ENCODE measurements at regions of chr6 and their contacts with region 1.

Region 1: DNA sequence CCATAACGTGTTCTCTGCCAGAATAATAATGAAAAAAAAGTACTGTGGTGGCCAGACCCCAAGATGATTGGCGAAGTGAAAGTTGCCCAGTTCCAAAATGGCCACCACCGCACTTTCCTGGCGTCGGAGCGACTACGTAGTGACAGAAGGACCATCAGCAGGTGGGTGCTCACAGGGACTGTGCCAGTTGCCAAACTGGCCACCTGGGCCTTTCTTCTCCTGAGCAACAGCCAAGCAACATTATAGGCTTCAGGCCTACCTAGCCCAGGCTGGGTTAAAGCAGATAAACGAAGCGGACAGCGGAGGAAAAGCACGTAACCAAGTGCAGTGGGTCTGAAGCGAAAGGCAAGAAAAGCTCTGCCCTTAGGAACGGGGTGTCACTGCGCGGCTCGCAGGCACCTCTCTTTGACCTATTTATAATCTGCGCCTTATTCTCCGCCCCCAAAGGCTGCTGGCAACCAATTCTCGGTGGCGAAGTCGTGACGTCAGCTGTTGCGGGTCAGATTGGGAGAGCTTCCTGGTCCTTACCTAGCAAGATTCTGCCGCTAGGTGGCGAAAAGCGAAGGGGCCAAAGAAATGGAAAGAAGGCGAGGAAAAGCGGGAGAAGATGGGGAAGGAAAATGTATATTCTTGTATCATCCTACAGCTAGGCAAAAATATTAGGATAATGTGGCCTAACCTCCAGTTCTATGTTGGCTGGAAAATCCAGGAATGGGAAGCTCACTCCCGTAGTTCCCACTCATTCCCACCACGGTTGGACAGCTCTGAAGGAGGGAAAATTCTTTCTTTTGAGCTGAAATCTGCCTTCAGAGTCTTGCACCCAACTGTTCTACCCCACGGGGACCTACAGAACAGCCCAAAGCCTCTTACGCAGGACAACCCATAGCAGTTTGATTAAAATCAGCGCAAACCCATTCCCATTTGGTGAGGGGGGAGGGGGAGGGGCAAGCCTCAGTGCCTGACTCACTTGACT is 6.9 kb upstream of the MOG start:
- DNase-seq: peak; percentile 63
- H3K4me3 ChIP-seq: peak overlapping the region; percentile 35
- H3K27me3 ChIP-seq: peaks cover 3% of the 10 kb centered on the region; the same call in 1 of the 2 replicates
- CTCF ChIP-seq: peak; percentile 94

Region 2: DNA sequence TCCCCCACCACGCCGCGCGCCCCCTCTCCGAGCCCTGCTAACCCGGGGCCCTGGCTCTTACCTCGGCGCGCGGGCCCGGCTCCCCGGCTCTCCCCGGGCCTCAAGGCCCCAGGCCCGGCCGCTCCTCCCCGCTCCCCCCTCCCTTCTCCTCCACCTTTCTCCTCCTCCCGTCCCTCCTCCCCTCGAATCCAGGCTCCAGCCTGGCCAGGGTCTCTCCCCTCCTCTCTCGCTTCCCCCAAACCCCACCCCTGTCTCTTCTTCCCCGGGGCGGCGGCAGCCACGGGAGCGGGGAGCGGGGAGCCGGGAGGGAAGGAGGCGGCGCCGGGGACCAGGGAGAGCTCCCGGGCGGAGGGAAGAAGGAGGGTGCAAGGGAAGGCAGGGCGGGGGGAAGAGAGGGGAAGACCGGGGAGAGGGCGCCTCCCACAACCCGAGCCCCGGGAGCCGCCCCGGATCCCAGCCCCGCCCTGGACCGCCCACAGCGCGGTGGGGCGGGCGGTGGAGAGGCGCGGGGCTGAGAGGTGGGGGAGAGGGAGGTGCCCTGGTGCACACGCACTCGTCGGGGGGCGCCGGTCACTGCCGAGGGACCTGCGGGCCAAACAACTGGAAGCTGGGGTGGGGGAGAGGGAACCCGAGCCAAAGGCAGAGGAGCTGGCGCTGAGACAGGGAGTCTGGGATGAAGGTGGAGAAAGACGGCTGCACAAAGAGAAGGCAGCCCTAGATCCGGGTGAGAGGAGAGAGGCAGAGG is 17.0 kb before region 1 on chr6 and contains the start of gene GABBR1:
- CTCF ChIA-PET with region 1: interaction called, 81 read pairs
- POLR2A ChIA-PET with region 1: interaction called, 6 read pairs
- DNase-seq: peak; percentile 53
- H3K4me3 ChIP-seq: peak within 1 kb of the TSS; percentile 80
- H3K27me3 ChIP-seq: no peaks in the 10 kb centered on the region; the same call in 1 of the 2 replicates
- CTCF ChIP-seq: no peak
- polyA plus RNA-seq, gene GABBR1: 14.5 and 16.3 TPM in 2 replicates

Region 3: DNA sequence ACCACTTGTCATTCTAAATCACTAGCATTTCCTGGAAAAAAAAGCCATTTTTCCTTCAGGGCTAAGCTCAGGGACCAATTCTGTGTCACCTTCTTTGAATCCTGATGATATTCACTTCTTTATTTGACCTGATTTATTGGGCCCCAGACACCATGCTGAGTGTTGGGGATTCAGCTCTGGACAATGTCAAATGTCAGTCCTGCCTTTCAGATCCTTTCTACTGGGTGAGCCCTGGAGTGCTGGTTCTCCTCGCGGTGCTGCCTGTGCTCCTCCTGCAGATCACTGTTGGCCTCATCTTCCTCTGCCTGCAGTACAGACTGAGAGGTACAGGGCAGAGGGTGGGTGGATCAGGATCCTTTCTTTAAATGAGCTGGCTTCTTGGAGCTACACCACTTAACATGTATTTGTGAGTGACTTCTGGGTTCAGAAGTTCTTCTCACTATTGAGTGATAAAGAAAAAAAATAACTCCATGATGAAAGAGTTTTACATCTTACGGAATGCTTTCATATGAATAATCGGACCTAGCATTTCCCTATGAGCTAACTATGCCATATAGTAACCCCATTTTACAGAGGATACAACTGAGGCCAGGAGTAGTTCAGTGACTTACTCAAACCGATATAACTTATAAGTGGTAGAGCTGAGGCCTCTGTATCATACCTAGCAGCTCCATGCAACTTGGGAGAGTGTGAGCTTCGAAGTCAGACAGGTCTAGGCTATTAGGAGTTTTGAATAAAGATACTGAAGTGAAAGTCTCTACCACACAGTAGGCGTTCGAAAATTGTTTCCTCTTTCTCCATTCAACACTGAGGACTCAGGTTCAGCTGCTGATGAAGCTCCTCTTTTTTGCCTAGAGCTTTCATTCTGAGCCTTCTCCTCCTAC is 16.2 kb after region 1 on chr6:
- CTCF ChIA-PET with region 1: interaction called, 147 read pairs
- POLR2A ChIA-PET with region 1: no interaction called
- DNase-seq: no peak
- H3K4me3 ChIP-seq: no peak overlapping the region
- H3K27me3 ChIP-seq: peaks cover 5% of the 10 kb centered on the region
- CTCF ChIP-seq: no peak

Region 4: DNA sequence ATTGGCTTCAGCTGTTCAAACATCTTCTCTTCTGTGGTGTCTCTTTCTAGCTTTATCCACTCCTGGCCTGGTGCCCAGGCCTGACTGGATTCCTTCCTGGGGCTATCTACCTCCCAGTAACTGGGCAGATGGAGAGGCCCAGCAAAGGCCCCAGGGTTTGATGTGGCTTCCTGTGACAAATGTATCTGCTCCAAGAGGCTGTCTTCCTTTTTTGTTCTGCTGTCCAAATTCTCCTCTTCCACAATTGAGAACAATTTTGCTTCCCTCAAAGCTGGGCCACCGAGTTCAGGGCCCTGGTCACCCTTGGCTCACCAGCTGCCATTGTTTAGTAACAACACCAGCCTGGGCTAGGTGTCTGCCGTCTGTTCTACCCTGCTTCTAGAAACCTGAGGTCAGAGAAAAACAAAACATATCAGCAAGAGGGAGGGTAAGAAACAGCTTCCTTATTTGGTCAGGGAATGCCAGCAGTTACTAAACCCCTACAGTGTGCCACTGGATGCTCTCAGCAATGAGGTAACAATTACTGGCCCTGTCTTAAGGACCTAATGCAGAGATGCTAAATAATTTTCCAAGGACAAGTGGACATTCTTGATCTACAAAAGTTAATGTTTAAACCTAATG is 27.1 kb after region 1 on chr6:
- CTCF ChIA-PET with region 1: interaction called, 26 read pairs
- POLR2A ChIA-PET with region 1: no interaction called
- DNase-seq: no peak
- H3K4me3 ChIP-seq: no peak overlapping the region
- H3K27me3 ChIP-seq: no peaks in the 10 kb centered on the region
- CTCF ChIP-seq: no peak

Region 5: DNA sequence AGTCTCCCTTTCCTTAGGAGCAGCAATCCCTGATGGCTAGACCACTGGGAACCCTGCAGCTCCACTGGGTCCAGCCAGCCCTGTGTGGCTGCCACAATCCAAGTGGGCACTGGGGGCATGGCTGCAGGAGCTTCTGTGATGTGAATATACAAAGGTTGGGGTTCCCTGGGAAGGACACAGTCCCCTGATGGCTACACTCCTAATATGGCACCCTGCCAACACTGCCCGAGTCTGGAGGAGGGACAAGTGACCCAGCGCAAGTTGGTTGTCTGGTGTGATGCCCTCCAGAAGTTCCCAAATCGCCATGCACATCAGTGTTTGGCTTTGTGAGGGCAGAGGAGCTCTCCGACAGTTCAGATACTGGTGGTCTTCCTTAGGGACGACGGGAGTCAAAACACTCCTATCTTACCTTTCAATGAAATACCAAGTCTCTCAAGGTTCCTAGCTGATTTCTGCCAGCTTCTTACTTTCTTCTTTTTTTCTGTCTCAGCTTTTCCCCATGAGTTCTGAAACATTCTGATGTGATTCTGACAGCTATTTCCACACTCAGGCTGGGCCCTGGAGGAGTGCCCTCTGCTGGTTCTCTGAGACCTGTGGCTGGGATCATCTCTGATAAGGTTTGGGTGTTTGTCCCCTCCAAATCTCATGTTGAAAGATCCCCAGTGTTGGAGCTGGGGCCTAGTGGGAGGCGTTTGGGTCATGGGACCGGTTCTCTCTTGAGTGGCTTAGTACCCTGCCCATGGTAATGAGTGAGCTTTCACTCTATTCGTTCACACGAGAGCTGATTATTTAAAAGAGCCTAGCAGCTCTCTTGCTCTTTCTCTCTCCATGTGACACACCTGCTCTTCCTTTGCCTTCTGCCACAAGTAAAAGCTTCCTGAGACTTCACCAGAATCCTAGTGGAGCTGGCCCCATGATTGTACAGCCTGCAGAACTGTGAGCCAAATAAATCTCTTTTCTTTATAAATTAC is 46.5 kb after region 1 on chr6:
- CTCF ChIA-PET with region 1: interaction called, 34 read pairs
- POLR2A ChIA-PET with region 1: no interaction called
- DNase-seq: no peak
- H3K4me3 ChIP-seq: no peak overlapping the region
- H3K27me3 ChIP-seq: no peaks in the 10 kb centered on the region
- CTCF ChIP-seq: peak; percentile 59

Region 6: GRCh38 chr6:29752451-29753308 is 102.7 kb after region 1 on chr6:
- CTCF ChIA-PET with region 1: interaction called, 10 read pairs
- POLR2A ChIA-PET with region 1: no interaction called
- DNase-seq: peak; percentile 59
- H3K4me3 ChIP-seq: peak overlapping the region; percentile 69
- H3K27me3 ChIP-seq: peaks cover 10% of the 10 kb centered on the region
- CTCF ChIP-seq: peak; percentile 100

Region 7: GRCh38 chr6:29834564-29835436 is 184.8 kb after region 1 on chr6:
- CTCF ChIA-PET with region 1: interaction called, 13 read pairs
- POLR2A ChIA-PET with region 1: no interaction called
- DNase-seq: no peak
- H3K4me3 ChIP-seq: no peak overlapping the region
- H3K27me3 ChIP-seq: peaks cover 11% of the 10 kb centered on the region
- CTCF ChIP-seq: peak; percentile 86